ENCODE measurements at regions of chr11 and their contacts with region 1.

Region 1: DNA sequence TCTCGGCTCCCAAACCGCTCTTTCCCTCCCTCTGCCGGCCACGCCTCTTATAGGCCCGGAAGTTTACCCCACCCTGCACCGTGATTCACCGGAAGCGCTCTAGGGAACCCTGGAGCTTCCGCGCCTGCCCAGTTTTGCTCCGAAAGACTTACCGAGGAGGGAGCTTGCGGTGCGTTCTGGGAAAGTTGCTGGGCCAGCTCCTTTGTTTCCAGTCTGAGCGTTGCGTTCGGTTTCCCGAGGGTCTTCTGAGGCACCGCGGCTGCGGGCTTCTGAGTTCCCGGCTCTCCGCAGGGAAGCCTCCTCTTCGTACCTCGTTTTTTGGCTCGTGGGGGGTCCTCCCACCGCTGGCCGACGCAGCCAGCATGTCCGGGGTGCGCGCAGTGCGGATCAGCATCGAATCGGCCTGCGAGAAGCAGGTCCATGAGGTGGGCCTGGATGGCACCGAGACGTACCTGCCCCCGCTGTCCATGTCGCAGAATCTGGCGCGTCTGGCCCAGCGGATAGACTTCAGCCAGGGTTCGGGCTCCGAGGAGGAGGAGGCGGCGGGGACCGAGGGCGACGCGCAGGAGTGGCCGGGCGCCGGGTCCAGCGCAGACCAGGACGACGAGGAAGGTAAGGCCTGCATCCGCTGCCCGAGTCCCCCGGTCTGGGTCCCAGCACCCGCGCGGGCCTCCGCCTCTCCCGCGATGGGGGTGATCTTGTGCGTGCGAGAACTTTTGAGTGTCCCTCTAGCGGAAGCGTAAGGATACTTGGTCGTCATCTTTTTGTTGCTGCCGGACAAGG is at the start of gene MED17:
- DNase-seq: peak; percentile 96
- H3K4me3 ChIP-seq: peak within 1 kb of the TSS; percentile 80 to 98 (median 85)
- H3K27ac ChIP-seq: peak within 1 kb of the TSS; percentile 92 to 99 (median 94)
- H3K4me1 ChIP-seq: peaks cover 29 to 39% (median 35%) of the 10 kb centered on the region in 4 donors
- H3K27me3 ChIP-seq: no peaks in the 10 kb centered on the region
- CTCF ChIP-seq: peak; percentile 34 to 57 (median 52)
- EP300 ChIP-seq: no peak
- POLR2A ChIP-seq: no peak
- total RNA-seq, gene MED17: 18.9 to 27.8 (median 22.3) TPM

Region 2: DNA sequence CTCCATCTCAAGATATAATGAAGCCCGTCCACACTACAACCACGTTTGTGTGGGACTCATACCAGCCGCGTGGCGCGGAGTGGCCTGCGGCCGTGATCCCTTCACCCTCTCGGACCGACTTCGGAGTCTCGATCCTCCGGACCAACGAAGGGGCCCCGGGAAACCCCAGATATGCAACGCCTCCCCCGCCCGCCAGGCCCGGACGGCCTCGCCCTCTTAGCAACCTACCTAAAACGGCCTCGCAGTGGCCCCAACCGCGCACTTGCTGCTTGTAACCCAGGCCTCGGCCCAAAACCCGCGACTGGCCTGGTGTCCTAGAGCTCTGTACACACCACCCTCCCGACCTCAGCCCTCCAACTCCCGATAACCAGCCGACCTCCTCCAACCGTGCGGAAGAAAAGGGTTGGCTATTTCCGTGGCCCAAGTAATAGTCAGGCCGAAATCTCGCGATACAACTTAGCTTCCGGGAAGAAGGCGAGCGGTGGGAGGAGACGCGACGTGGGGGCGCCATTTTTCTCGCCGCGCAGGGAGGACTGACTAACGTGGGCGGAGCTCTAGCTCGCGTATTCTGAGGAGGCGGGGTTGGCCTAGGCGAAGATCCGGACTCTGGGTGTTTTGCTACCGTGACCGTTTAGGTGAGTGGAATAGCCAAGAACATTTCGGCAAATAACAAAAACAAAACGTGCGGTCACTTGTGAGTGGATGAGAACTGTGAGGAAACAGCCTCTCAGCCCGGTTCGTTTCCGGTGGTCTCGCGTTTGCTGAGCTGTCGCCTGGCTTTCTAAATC is 43.1 kb before region 1 on chr11 and contains the starts of genes C11orf54 and TAF1D:
- intact Hi-C with region 1: loop called (anchors 2 kb)
- DNase-seq: peak; percentile 99
- H3K4me3 ChIP-seq: peak within 1 kb of the TSS; percentile 70 to 88 (median 80)
- H3K27ac ChIP-seq: peak within 1 kb of the TSS; percentile 88 to 95 (median 94)
- H3K4me1 ChIP-seq: peaks cover 36 to 76% (median 67%) of the 10 kb centered on the region in 4 donors
- H3K27me3 ChIP-seq: no peaks in the 10 kb centered on the region
- CTCF ChIP-seq: peak in 2 of 3 experiments; percentile 1 to 5
- EP300 ChIP-seq: no peak
- POLR2A ChIP-seq: peak; percentile 84
- total RNA-seq, gene C11orf54: 27.7 to 46.7 (median 37.9) TPM
- total RNA-seq, gene TAF1D: 34.7 to 61.8 (median 46.3) TPM

Region 3: GRCh38 chr11:94295376-94295933 is 511.1 kb after region 1 on chr11:
- intact Hi-C with region 1: no loop called
- DNase-seq: no peak
- H3K4me3 ChIP-seq: no peak overlapping the region
- H3K27ac ChIP-seq: no peak overlapping the region
- H3K4me1 ChIP-seq: no peaks in the 10 kb centered on the region
- H3K27me3 ChIP-seq: no peaks in the 10 kb centered on the region
- CTCF ChIP-seq: no peak
- EP300 ChIP-seq: no peak
- POLR2A ChIP-seq: no peak

Measured in esophagus muscularis mucosa (tissue), 4 donors.